IMR-90 (cell line): ENCODE measurements at regions of chr20 and their contacts with region 1.

Region 1: DNA sequence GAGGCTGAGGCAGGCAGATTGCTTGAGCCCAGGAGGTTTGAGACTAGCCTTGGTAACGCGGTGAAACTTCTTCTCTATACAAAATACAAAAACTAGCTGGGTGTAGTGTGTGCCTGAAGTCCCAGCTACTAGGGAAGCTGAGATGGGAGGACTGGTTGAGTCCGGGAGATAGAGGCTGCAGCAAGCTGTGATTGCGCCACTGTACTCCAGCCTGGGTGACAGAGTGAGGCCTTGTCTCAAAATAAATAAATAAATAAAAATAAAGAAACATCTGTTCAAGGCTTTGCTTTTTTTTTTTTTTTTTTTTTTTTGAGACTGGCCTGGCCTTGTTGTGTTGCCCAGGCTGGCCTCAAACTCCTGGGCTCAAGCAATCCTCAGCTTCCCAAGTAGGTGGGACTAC is 23.7 kb upstream of the SLC23A2 start:
- DNase-seq: no peak
- ATAC-seq: no peak
- H3K4me3 ChIP-seq: no peak overlapping the region
- H3K27ac ChIP-seq: no peak overlapping the region
- H3K4me1 ChIP-seq: no peaks in the 10 kb centered on the region; the same call in 1 of the 2 replicates
- H3K27me3 ChIP-seq: no peaks in the 10 kb centered on the region
- CTCF ChIP-seq: no peak
- POLR2A ChIP-seq: no peak
- RAD21 ChIP-seq: no peak

Region 2: GRCh38 chr20:4869290-4870193 is 155.4 kb before region 1 on chr20:
- CTCF ChIA-PET with region 1: interaction called, 3 read pairs
- POLR2A ChIA-PET with region 1: interaction called, 10 read pairs
- dilution Hi-C with region 1: no loop called
- in situ Hi-C with region 1: no loop called
- intact Hi-C with region 1: no loop called
- DNase-seq: peak; percentile 86
- ATAC-seq: peak; percentile 86
- H3K4me3 ChIP-seq: no peak overlapping the region
- H3K27ac ChIP-seq: no peak overlapping the region
- H3K4me1 ChIP-seq: peaks cover 6% of the 10 kb centered on the region; the same call in 1 of the 2 replicates
- H3K27me3 ChIP-seq: no peaks in the 10 kb centered on the region
- CTCF ChIP-seq: no peak
- POLR2A ChIP-seq: no peak
- RAD21 ChIP-seq: 0 out of 2 replicates have a peak, but pooled peaks have one; percentile 1